ENCODE measurements at regions of chr17 and their contacts with region 1.

Region 1: DNA sequence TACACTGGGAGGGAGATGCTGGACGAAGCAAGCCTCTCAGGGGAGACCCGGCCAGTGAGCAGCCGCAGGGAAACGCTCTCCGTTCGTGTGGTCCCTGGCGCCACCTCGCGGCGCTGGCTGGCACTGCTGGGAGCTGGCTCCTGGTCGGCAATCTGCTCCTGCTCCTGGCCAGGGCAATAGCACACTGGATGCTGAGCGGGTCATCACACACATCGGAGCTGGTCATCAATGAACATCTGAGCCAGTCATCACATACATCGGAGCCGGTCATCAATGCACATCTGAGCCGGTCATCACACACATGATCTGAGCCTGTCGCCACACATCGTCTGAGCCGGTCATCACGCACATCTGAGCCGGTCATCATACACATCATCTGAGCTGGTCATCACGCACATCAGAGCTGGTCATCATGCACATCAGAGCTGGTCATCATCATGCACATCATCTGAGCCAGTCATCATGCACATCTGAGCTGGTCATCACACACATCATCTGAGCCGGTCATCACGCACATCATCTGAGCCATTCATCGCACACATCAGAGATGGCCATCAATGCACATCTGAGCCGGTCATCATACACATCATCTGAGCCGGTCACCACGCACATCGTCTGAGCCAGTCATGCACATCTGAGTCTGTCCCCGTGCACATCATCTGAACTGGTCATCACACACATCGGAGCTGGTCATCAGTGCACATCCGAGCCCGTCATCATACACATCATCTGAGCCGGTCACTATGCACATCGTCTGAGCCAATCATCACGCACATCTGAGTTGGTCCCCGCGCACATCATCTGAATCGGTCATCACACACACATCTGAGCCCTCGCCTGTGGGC is 217.3 kb downstream of the RBFOX3 start:
- DNase-seq: peak; percentile 89
- H3K4me3 ChIP-seq: no peak overlapping the region
- H3K27ac ChIP-seq: no peak overlapping the region
- H3K4me1 ChIP-seq: no peaks in the 10 kb centered on the region
- H3K27me3 ChIP-seq: no peaks in the 10 kb centered on the region
- CTCF ChIP-seq: peak; percentile 83 to 92 (median 92)
- POLR2A ChIP-seq: no peak

Region 2: DNA sequence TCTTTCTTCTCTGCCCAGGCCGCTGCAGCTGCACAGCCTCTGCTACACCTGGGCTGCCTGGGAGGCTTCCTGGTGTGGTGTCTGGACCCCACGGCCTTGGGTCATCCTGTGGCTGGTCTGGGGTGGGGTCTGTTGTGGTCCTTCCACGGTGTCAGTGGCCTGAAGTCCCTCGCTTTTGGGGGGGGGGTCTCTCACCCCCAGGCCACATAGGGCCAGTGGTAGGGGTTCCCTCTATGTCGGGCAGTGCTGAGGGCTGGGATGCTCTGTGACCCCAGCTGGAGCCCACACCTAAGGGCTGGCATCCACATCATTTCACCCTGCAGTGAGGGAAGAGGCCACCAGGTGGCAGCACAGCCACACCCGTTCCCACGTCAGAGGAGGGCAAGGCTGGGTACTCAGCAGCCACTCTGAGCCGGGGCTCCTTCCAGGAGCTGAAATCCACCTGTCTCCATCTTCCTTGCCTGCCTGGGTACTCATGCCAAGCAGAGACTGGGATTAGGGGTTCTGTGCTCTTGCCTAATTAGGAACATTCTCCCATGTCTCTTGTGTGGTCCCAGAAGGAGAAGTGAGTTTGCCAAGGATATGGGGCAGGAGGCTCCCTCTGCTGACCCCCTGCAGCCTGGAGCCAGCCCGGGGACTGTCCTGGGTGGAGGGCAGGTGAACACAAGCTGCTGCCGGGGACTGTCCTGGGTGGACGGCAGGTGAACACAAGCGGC is 306.0 kb before region 1 on chr17:
- intact Hi-C with region 1: loop called (anchors 5 kb)
- DNase-seq: peak; percentile 83
- H3K4me3 ChIP-seq: no peak overlapping the region
- H3K27ac ChIP-seq: no peak overlapping the region
- H3K4me1 ChIP-seq: peaks cover 8% of the 10 kb centered on the region
- H3K27me3 ChIP-seq: no peaks in the 10 kb centered on the region
- CTCF ChIP-seq: peak; percentile 87 to 94 (median 91)
- POLR2A ChIP-seq: no peak

Region 3: DNA sequence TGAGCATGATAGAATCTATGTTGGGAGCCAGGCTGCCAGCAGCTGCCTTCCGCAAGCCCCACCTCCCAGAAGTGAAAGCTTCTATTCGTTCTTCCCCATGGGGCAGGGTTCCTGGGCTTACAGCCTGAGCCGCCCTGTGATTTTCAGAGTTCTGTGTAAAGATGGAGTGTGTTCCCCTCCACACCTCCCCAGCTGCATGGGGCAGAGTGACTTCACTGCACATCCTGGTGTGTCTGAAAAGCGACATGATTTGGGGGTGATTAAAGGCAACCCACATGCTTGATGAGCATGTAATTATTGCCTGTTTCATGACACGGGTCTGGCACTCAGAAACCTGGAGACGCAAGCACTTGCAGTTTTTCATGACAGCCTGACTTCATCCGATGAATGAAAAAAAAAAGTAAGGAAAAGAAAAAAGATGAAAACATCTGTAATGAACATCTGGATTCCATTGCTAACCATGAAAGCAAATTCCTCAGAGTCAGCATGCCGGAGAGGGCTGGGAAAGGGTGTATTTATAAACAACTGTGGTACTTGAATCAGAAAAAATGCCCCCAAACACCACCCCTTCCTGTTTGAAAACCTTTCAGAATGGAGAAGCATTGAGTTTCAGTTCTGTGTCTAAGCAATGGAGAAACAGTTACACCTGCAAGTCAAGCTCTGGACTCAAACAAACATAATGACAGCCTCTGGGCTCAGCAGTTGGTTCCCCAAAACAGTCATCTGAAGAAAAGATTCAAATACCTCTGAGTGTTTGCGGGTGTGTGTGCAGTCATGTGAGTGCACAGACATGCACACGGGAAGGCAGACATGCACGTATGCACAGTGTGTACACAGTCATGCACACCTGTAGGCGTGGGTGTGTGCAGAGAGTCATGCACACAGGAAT is 53.0 kb before region 1 on chr17:
- intact Hi-C with region 1: no loop called
- DNase-seq: no peak
- H3K4me3 ChIP-seq: no peak overlapping the region
- H3K27ac ChIP-seq: no peak overlapping the region
- H3K4me1 ChIP-seq: no peaks in the 10 kb centered on the region
- H3K27me3 ChIP-seq: no peaks in the 10 kb centered on the region
- CTCF ChIP-seq: no peak
- POLR2A ChIP-seq: no peak

Region 4: DNA sequence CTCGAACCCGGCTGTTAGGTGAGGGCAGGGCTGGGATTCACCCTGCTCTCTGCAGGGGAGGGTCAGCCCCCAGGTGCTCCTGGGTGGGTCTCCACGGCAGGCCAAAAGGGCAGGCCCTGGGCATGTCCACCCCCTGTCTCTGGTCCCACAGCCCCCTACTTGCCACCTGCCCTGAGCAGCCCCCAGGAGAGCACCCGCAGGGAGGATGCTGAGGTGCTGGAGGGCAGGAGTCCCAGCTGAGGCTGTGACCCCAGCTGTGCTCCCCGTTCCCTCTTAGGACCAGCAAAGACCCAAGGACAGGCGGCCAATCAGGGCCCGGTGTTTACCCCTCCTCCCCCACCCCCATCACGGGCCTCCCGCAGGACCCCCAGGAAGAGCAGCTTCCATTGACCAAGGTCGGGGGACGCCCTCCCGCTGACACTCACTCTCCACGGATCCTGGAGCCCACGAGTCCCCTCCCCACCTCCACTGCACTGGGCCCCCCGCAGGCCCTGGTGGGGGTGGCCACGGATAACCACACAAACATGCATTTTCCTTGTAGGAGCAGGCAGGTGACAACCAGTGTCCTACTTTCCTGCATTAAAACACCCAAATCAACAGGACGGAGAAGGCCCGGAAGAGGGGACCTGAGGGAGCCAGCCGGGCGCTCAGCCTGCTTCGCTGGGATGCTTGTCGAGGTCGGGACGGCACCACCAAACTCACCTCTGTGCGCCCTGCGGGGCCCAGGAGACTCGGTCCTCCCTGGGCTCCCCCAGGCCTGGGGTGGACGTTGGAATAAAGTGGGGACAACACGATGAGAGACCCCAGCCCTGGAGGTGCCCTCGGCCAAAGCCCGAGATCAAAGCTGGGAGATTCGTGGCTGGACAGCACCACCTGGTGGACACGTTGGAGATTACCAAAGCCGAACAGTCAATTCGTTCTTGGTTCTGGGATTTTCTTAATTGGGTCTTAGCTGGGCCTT is 314.6 kb after region 1 on chr17:
- intact Hi-C with region 1: loop called (anchors 10 kb)
- DNase-seq: peak; percentile 75
- H3K4me3 ChIP-seq: peak overlapping the region in 1 of 2 donors; percentile 36
- H3K27ac ChIP-seq: no peak overlapping the region
- H3K4me1 ChIP-seq: no peaks in the 10 kb centered on the region
- H3K27me3 ChIP-seq: no peaks in the 10 kb centered on the region
- CTCF ChIP-seq: peak; percentile 71 to 88 (median 86)
- POLR2A ChIP-seq: no peak

Region 5: GRCh38 chr17:80101011-80101945 is 707.7 kb after region 1 on chr17 and contains the start of gene GAA:
- intact Hi-C with region 1: no loop called
- DNase-seq: peak; percentile 87
- H3K4me3 ChIP-seq: peak within 1 kb of the TSS; percentile 85 to 88
- H3K27ac ChIP-seq: peak within 1 kb of the TSS; percentile 73 to 94
- H3K4me1 ChIP-seq: peaks cover 14% of the 10 kb centered on the region
- H3K27me3 ChIP-seq: no peaks in the 10 kb centered on the region
- CTCF ChIP-seq: peak; percentile 87 to 98 (median 97)
- POLR2A ChIP-seq: no peak
- total RNA-seq, gene GAA: 166 to 190 TPM

Region 6: GRCh38 chr17:80513892-80514291 is 1120.3 kb after region 1 on chr17:
- intact Hi-C with region 1: no loop called
- DNase-seq: peak; percentile 52
- H3K4me3 ChIP-seq: no peak overlapping the region
- H3K27ac ChIP-seq: peak overlapping the region; percentile 23 to 70
- H3K4me1 ChIP-seq: peaks cover 23% of the 10 kb centered on the region
- H3K27me3 ChIP-seq: no peaks in the 10 kb centered on the region
- CTCF ChIP-seq: no peak
- POLR2A ChIP-seq: no peak

Measured in testis (tissue), 5 donors.